Posterior vena cava (tissue), 2 donors: ENCODE measurements at regions of chr7 and their contacts with region 1.

Region 1: DNA sequence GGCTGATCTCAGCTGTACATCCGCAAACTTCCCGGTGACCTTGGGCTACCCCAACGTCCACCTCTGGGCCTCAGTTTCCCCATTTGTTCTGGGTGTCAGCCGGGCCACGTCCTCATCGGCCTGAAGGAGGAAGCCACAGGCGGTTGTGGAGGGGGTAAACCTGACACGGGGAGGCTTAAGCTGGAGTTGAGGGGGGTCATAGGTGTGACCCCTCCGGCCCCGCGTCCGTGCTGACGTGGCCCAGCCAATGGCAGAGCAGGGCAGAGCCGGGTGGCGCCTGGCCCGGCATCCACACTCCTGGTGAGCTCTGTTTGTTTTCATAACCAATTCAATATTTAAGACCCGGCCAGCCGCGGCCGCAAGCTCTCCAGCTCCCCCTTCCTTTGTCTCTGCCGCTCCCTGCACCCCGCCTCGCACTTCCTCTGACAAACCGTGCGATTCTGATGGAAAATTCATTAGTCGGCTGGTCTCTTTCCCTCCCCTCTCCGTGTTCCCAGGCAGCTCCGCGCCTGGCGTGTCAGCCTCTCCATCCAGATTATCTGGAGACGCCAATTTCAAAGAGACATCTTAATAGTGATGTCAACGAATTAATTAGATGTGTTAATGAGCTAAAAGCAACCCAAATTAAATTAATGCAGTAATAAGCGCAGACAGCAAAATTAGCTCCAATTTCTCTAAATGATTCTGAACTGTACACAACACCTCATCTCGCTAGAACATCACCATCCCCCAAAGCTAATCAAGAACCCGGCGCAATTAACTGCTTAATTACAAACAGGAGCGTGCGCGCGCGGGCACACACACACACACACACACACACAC is 55.4 kb downstream of the MICALL2 start:
- DNase-seq: no peak

Region 2: GRCh38 chr7:1331561-1332488 is 72.0 kb before region 1 on chr7:
- intact Hi-C with region 1: no loop called
- DNase-seq: peak; percentile 58

Region 3: GRCh38 chr7:1345796-1346755 is 57.8 kb before region 1 on chr7:
- intact Hi-C with region 1: loop called in 1 of 2 experiments (anchors 2 kb)
- DNase-seq: peak; percentile 77

Region 4: DNA sequence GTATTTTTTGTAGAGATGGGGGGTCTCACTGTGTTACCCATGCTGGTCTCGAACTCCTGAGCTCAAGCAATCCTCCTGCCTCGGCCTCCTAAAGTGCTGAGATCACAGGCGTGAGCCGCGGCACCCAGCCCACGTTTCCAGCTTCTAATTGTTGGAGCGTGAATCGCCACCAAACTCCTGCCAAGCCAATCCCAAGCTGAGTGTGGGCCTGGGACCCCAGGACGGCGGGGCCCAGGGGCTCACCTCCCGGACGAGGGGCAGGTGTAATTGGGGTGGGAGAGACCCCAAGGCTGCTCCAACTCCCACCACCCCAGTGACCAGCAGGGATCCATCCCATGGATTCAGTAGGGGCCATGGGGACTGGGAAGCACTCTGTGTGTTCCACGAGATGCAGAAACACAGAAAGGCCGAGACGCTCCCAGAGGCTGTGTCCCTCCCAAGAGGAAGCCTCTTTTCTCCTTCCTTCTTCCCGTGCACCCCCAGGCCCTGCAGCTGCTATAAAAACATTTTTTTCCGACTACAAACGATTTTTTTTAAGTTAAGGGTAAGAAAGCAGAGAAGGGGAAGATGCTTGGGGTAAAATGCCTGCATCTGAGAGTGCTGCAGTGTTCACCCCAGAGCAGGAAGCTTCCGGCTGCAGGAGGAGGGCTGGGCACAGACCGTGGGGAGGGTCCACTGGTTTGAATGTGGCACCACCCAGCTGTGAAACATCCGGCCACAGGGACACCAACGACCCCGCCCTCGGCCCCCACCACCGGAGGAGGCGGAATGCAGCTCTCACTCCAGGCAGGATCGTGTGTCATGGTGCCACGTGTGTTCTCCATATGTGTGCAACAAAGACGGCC is 21.1 kb before region 1 on chr7:
- intact Hi-C with region 1: loop called in 1 of 2 experiments (anchors 1 kb)
- DNase-seq: no peak